Heart left ventricle (tissue), 16 donors: ENCODE measurements at regions of chr5 and their contacts with region 1.

Region 1: DNA sequence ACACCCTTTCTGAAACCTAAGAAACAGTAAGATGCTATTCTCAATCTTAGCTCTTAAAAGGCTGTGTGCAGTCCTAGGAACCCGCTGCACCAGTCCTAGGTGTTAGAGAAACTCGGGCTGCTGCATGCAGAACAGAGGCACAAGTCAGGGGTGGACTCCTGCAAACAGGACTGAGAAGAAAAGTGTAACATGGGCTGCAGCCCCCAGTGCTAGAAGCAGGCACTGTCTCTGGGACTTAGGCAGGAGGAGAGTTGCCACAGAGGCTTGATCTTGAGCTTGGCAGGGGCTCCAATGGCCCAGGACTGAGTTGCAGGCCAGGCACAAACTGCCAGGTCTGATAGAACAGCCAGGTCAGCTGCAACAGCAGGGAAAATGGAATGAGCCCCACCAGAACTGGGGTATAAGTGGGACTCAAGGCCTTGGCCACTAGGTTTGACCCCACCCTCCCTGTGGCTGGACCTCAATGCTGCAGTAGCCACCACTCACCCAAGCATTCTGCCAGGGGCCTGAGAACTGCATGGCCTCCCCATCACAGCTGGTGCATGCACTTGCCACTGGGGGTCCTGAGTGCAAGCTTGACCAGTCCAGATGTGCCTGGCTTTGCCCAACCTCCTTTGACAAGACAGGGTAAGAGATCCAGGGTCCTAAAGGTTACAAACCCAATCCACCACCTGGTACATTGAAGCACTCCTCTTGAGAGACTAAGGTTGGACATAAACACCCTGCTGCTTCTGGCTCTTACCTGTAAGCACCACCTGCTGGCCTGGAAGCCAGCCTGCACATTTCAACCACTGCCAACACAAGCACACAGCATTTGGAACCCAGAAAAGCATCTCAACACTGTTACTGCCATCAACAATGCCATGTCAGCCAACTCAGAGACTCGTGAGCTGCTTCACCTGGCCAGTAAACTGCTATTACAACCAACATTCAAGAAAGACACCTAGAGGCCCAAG is 103.3 kb downstream of the FBXL17 start:
- DNase-seq: peak in 2 of 5 donors; percentile 15 to 43
- ATAC-seq: peak in 1 of 4 donors; percentile 44
- H3K4me3 ChIP-seq: no peak overlapping the region
- H3K27ac ChIP-seq: no peak overlapping the region
- H3K4me1 ChIP-seq: peaks cover 0 to 14% (median 3%) of the 10 kb centered on the region in 12 donors
- H3K27me3 ChIP-seq: no peaks in the 10 kb centered on the region
- CTCF ChIP-seq: no peak
- POLR2A ChIP-seq: no peak

Region 2: DNA sequence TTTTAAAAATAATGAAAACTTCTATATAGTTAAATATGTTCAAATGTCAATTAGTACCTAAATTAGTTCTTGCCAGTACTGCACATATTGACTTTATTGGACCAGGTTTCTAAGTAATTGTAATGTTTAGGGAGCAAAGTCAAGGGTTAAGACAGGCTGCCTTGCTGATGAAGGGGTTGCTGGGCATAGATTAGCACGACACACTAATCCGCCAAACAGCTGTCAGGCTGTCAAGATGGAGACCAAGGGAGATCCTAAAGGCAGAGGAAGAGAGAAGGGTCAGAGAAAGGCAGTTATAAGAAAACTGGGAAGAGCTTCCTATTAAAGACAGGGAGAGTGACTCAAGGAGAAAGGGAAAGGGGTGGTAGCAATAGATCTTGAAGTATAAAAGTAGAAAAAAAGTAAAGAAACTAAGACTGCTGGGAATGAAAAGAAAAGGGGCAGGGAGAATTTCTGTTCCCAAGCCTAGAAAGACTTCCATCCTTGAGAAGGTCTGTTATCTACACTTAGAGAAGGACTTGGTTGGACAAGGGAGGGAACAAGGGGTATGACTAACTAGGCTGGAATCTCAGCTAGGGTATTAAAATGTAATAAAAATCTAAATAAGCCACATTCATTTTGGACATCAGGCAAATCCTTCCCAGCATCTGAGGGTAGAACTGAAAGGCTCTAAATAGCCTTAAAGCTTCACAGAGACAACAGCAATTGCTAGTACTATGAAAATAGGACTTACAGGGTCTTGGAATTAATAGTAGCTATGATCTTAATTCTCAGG is 85.4 kb before region 1 on chr5:
- intact Hi-C with region 1: no loop called
- DNase-seq: no peak
- ATAC-seq: no peak
- H3K4me3 ChIP-seq: no peak overlapping the region
- H3K27ac ChIP-seq: no peak overlapping the region
- H3K4me1 ChIP-seq: peaks cover 0 to 5% (median 0%) of the 10 kb centered on the region in 12 donors
- H3K27me3 ChIP-seq: no peaks in the 10 kb centered on the region
- CTCF ChIP-seq: no peak
- POLR2A ChIP-seq: no peak

Region 3: DNA sequence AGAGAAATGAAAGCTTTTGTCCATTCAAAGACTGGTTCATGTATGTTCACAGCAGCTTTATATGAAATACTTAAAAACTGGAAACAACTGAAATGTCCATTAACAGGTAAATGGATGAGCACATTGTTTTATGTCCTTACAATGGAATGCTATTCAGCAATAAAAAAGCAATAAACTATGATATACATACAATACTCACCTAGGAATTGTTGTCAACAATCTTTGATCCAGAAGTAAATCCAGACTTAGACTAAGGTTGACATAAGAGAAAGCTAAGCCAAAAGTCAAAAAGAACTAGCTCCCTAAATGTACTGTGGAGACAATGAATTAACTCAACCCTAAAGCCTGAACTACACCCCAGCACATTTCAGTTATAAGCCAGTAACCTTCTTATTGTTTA is 48.4 kb after region 1 on chr5:
- intact Hi-C with region 1: loop called in 1 of 10 experiments (anchors 2 kb)
- DNase-seq: no peak
- ATAC-seq: no peak
- H3K4me3 ChIP-seq: no peak overlapping the region
- H3K27ac ChIP-seq: no peak overlapping the region
- H3K4me1 ChIP-seq: no peaks in the 10 kb centered on the region
- H3K27me3 ChIP-seq: no peaks in the 10 kb centered on the region
- CTCF ChIP-seq: no peak
- POLR2A ChIP-seq: no peak